ENCODE measurements at regions of chr3 and their contacts with region 1.

Region 1: DNA sequence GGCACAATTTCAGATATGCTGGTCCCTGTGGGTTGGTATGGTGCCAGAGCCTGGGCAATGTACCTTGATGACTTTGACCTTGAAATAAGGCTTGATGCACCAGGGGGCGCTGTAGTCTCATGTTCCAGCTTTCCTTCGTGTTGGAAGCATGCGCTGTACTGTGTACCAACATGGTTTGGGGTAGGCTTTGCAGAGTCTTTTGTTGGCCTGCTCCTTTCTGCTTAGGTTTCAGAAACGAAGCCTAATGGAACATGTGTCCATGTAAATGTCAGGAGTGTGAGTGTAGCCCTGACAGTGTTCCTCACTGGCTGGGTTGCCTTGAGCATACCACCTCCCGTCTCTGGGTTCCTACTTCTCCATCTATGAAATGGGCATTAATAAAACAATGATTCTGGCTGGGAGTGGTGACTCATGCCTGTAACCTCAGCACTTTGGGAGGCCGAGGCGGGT is 3.6 kb upstream of the CCR4 start:
- DNase-seq: peak; percentile 91
- H3K4me3 ChIP-seq: no peak overlapping the region
- H3K27ac ChIP-seq: no peak overlapping the region
- H3K4me1 ChIP-seq: no peaks in the 10 kb centered on the region
- H3K27me3 ChIP-seq: no peaks in the 10 kb centered on the region
- CTCF ChIP-seq: peak; percentile 89

Region 2: GRCh38 chr3:32484436-32484835 is 463.4 kb before region 1 on chr3:
- CTCF ChIA-PET with region 1: no interaction called
- POLR2A ChIA-PET with region 1: no interaction called
- intact Hi-C with region 1: no loop called
- DNase-seq: no peak
- H3K4me3 ChIP-seq: no peak overlapping the region
- H3K27ac ChIP-seq: no peak overlapping the region
- H3K4me1 ChIP-seq: no peaks in the 10 kb centered on the region
- H3K27me3 ChIP-seq: no peaks in the 10 kb centered on the region
- CTCF ChIP-seq: no peak

Region 3: GRCh38 chr3:33095436-33095835 is 147.6 kb after region 1 on chr3:
- CTCF ChIA-PET with region 1: no interaction called
- POLR2A ChIA-PET with region 1: no interaction called
- intact Hi-C with region 1: no loop called
- DNase-seq: no peak
- H3K4me3 ChIP-seq: peak overlapping the region; percentile 94
- H3K27ac ChIP-seq: peak overlapping the region; percentile 93
- H3K4me1 ChIP-seq: peaks cover 9% of the 10 kb centered on the region
- H3K27me3 ChIP-seq: no peaks in the 10 kb centered on the region
- CTCF ChIP-seq: no peak

Region 4: GRCh38 chr3:33372218-33373081 is 424.6 kb after region 1 on chr3:
- CTCF ChIA-PET with region 1: interaction called, 6 read pairs
- POLR2A ChIA-PET with region 1: no interaction called
- intact Hi-C with region 1: loop called (anchors 2 kb)
- DNase-seq: peak; percentile 76
- H3K4me3 ChIP-seq: no peak overlapping the region
- H3K27ac ChIP-seq: no peak overlapping the region
- H3K4me1 ChIP-seq: no peaks in the 10 kb centered on the region
- H3K27me3 ChIP-seq: no peaks in the 10 kb centered on the region
- CTCF ChIP-seq: peak; percentile 96

Measured in A673 (cell line).